ENCODE measurements at regions of chr10 and their contacts with region 1.

Region 1: GRCh38 chr10:93288654-93289634 is 193.2 kb downstream of the MYOF start:
- DNase-seq: peak; percentile 17
- H3K4me3 Mint-ChIP-seq: no peak overlapping the region
- H3K27ac Mint-ChIP-seq: no peak overlapping the region
- H3K4me1 Mint-ChIP-seq: no peaks in the 10 kb centered on the region
- H3K27me3 Mint-ChIP-seq: no peaks in the 10 kb centered on the region

Region 2: GRCh38 chr10:93080350-93081046 is 208.4 kb before region 1 on chr10:
- intact Hi-C with region 1: loop called (anchors 2 kb)
- DNase-seq: no peak
- H3K4me3 Mint-ChIP-seq: no peak overlapping the region
- H3K27ac Mint-ChIP-seq: no peak overlapping the region
- H3K4me1 Mint-ChIP-seq: peaks cover 10% of the 10 kb centered on the region
- H3K27me3 Mint-ChIP-seq: peaks cover 44% of the 10 kb centered on the region

Region 3: DNA sequence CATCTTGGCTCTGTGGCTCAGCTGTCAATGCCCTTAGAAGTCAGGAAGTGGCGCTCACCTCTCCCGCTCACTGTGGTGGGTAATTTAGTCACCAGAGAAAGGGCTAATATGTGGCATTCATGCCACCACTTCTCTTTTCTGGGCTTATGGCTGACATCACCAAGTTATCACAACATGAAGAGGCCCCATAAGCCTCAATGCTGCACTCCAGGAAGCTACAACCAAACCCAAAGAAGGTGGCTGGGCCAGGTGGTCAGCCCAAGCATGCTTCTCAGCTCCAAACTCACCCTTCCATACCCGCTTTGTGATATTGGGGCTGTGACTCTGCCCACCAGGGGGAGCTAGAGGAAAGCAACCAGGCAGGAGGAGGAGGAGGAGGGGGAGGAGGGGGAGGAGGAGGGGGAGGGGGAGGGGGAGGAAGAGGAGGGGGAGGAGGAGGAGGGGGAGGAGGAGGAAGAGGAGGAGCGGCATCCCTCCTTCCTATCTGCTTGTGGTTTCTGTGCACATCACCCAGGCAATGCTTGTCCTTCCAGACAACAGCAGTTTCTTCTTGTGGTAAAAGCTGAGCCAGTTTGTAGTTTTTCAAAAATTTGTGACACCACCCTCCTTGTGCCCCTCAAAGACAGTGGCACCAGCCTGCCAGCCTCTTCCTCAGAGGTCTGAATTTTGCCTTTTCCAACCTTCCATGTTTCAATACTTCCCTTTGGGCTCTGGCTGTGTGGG is 173.1 kb before region 1 on chr10:
- intact Hi-C with region 1: loop called (anchors 1 kb)
- DNase-seq: peak; percentile 47
- H3K4me3 Mint-ChIP-seq: no peak overlapping the region
- H3K27ac Mint-ChIP-seq: no peak overlapping the region
- H3K4me1 Mint-ChIP-seq: no peaks in the 10 kb centered on the region
- H3K27me3 Mint-ChIP-seq: peaks cover 17% of the 10 kb centered on the region

Region 4: DNA sequence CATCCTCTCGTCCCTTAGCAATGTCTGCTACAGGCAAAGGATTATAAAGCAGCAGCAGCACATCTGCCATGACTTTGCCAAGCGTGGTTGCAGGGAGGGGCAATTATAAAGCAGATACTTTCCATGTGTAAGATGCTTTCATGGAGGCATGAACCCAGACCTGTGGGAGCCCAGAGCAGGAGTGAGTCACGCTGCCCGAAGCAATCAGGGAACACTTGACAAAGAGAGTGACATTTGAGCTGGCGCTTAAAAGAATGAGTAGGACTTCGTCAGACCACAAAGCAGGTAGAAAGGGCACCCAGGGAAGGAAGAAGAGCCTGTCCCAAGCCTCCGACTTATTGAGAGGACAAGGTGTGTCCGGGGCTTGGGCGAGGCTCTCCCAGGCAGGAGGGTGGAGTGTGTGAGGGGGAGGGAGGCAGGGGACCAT is 46.0 kb after region 1 on chr10:
- intact Hi-C with region 1: no loop called
- DNase-seq: no peak
- H3K4me3 Mint-ChIP-seq: no peak overlapping the region
- H3K27ac Mint-ChIP-seq: no peak overlapping the region
- H3K4me1 Mint-ChIP-seq: no peaks in the 10 kb centered on the region
- H3K27me3 Mint-ChIP-seq: no peaks in the 10 kb centered on the region